ENCODE measurements at regions of chr11 and their contacts with region 1.

Region 1: GRCh38 chr11:35106595-35106994 is 32.4 kb upstream of the CD44 start:
- DNase-seq: peak in 1 of 5 donors; percentile 19
- H3K4me3 ChIP-seq: no peak overlapping the region
- H3K4me3 Mint-ChIP-seq: peak overlapping the region in 7 of 8 donors; percentile 29 to 69 (median 63)
- H3K27ac ChIP-seq: no peak overlapping the region
- H3K27ac Mint-ChIP-seq: peak overlapping the region; percentile 30 to 93 (median 81)
- H3K4me1 ChIP-seq: peaks cover 55% of the 10 kb centered on the region
- H3K4me1 Mint-ChIP-seq: peaks cover 48 to 70% (median 59%) of the 10 kb centered on the region in 4 donors
- H3K27me3 ChIP-seq: no peaks in the 10 kb centered on the region
- H3K27me3 Mint-ChIP-seq: no peaks in the 10 kb centered on the region

Region 2: DNA sequence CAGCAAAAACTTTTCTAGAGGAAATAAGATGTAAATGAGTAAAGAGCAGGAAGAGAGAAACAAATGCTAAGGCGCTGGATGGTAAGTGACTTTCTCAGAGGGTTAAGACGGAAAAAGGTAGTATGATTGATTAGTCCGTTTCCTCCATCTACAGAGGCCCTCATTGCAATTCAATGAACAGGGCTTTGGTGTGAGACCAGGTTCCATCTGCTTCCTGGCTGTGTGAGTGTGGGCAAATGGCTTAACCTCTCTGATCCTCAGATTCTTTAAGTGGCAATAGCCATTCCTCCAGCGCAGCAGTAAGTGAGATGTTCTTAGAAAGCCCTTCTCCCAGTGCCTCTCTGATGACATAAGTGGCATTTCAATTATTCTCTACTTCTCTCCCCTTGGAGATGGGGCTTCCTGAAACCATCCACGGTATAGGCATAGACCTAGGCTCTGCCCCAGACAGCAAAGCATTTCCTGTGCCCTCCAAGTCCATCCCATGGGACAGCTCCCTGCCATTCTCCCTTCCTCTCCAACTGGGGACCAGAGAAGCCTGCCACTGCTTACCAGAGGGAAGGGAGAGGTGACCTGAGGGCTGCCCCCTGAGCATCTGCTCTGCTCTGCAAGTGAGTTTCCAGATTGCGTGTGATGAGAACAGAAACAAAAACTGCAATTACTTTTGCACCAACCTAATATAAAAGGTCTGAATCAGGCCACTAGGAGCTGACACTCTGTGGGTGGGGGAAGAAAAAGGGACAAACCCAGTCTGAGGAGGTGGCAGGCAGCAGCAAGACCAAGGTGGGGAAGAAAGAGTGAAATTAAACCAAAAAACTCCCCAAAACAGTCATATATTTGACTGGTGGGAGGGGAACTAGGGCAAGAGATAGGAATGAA is 19.6 kb after region 1 on chr11:
- CTCF ChIA-PET with region 1: no interaction called
- POLR2A ChIA-PET with region 1: interaction called, 3 read pairs
- intact Hi-C with region 1: loop called (anchors 2 kb)
- DNase-seq: peak in 3 of 5 donors; percentile 41 to 70 (median 53)
- H3K4me3 ChIP-seq: peak overlapping the region; percentile 23 to 42
- H3K4me3 Mint-ChIP-seq: peak overlapping the region; percentile 54 to 80 (median 74)
- H3K27ac ChIP-seq: peak overlapping the region; percentile 40
- H3K27ac Mint-ChIP-seq: peak overlapping the region; percentile 80 to 92 (median 89)
- H3K4me1 ChIP-seq: peaks cover 55% of the 10 kb centered on the region
- H3K4me1 Mint-ChIP-seq: peaks cover 47 to 65% (median 60%) of the 10 kb centered on the region in 4 donors
- H3K27me3 ChIP-seq: no peaks in the 10 kb centered on the region
- H3K27me3 Mint-ChIP-seq: no peaks in the 10 kb centered on the region

Measured in CD4-positive, alpha-beta memory T cell (primary cell).